Activated CD4-positive, alpha-beta memory T cell treated with anti-CD3 and anti-CD28 coated beads for 36 hours (primary cell): ENCODE measurements at regions of chr20 and their contacts with region 1.

Region 1: DNA sequence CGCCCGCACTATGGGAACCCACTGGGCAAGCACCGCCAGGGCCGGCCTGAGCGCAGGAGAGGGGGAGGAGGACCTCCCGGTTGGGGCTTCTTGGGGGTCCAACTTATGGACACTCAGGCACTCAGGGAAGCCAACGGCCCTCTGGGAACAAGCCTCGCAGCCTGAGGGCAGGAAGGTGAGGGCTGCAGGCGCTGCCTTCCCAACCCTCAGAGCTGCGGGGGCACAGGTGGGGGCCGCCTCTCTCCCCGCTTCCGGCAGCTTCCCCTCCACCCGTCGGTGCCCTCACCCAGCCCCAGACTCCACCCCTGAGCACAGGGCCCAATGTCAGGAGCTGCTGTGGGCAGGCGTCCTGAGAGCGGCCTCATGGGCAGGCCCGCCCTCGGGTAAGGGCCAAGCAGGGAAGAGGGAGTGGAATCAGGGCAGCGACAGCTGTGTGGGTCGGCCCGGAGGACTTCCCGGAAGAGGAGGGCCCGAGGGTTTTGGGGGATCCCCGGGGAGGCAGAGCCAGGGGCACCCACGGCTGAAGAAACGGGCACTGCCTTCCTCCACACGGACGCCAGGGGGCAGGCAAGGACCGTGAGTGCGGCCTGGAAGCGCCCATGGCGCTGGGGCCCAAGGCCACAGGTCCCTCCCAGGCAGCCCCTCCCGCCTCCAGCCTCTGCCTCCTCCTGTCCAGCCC is 488 bp upstream of the PTK6 start:
- DNase-seq: peak; percentile 99
- H3K4me3 Mint-ChIP-seq: peak overlapping the region; percentile 66
- H3K27ac Mint-ChIP-seq: peak overlapping the region; percentile 80
- H3K4me1 Mint-ChIP-seq: peaks cover 15% of the 10 kb centered on the region
- H3K27me3 Mint-ChIP-seq: no peaks in the 10 kb centered on the region

Region 2: DNA sequence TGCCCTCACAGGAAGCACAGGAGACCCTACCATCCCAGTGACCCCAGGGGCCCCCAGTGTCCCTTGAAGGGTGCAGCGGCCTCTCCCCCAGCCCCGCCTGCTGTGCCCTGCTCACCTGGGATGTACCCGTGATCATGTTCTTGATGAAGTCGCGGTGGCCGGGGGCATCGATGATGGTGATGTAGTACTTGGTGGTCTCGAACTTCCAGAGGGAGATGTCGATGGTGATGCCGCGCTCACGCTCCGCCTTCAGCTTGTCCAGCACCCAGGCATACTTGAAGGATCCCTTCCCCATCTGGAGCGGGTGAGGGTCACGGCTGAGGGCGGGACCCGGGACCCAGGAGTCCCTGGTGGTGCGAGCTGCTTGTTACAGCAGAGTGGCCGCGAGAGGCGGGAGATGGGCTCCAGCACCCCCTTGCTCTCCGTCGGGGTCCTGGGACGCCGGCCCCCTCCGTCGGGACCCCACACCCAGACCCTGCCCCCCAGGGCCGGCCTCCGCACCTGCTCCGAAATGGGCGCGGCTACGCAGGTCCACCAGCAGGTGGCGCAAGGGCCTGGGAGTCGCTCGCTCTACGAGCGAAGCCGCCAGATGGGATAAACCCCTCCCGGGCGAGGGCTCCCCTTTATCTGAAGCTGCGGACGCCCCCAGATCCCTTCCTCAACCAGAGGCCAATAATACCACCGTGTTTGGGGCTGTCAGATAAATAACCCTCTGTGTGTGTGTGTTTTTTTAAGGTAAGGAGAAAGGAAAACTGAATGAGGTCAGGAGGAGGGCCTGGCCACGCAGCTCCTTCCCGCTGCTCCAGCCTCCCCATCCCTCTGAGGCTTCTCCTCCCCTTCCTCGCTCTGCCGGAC is 41.7 kb before region 1 on chr20:
- CTCF ChIA-PET with region 1: interaction called, 11 read pairs
- POLR2A ChIA-PET with region 1: interaction called, 4 read pairs
- intact Hi-C with region 1: no loop called
- DNase-seq: peak; percentile 79
- H3K4me3 Mint-ChIP-seq: no peak overlapping the region
- H3K27ac Mint-ChIP-seq: no peak overlapping the region
- H3K4me1 Mint-ChIP-seq: no peaks in the 10 kb centered on the region
- H3K27me3 Mint-ChIP-seq: peaks cover 18% of the 10 kb centered on the region

Region 3: DNA sequence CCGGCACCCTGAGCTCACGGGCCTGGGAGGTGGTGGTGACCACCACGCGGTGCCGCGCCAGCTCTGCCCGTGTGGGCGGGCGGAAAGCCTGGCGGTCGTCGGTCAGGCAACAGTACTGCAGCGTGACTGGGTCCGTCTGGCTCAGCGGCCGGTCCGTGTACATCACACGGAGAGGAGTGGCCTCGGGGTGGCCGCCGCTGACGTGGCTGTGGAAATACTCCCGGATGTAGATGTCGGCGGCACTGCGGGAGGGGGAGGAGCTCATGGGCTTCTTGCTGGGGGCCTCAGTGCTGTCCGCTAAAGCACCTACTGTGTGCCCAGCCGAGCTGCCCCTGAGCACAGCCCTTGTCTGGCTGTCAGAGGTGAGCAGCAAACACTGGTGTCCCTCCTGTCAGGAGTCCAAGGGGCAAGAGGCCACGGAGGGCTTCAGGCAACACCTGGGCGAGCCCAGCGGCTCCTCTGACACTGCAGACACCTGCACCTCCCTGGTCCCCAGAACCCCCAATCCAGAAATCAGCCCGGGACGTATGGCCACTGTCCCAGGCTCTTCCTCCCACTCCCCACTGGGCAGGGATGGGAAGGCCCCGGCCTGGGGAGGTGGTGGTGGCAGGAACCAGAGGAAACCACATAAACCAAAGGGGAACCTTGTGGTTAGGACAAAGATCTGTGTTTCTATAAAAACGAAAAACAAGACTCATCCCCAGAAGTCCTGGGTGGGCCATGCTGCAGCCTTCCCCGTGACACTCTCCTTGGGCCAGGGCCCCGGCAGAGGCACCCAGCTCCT is 29.9 kb after region 1 on chr20:
- CTCF ChIA-PET with region 1: interaction called, 11 read pairs
- POLR2A ChIA-PET with region 1: interaction called, 3 read pairs
- intact Hi-C with region 1: no loop called
- DNase-seq: peak; percentile 80
- H3K4me3 Mint-ChIP-seq: peak overlapping the region; percentile 45
- H3K27ac Mint-ChIP-seq: peak overlapping the region; percentile 42
- H3K4me1 Mint-ChIP-seq: peaks cover 25% of the 10 kb centered on the region
- H3K27me3 Mint-ChIP-seq: peaks cover 2% of the 10 kb centered on the region

Region 4: DNA sequence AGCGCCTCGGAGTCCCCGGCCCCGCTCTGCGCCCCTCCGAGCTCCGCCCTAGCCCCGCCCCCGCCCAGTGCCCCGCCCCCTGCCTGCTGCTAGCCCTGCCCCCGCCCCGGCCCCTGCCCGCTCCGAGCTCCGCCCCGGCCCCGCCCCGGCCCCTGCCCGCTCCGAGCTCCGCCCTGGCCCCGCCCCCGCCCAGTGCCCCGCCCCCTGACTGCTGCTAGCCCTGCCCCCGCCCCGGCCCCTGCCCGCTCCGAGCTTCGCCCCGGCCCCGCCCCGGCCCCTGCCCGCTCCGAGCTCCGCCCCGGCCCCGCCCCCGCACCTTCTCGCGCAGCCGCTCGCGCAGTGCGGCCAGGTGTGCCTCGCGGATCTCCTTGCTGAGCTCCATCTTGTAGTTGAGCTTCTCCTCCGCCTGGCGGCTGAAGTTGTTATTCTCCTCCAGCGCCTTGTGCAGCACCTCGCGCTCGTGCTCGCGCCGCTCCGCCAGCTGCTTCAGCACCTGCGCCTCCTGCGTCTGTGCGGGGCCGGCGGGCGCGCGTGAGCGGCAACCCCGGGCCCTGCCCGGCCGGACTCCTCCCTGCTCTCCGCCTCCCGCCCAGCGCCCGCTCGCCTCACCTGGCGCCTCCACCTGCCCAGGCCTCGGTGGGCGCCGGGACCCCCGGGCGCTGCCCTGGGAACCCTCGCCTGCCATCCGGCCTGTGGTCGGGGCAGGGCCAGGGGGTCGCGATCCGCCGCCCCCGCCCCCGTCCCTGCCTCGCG is 104.3 kb after region 1 on chr20:
- CTCF ChIA-PET with region 1: interaction called, 17 read pairs
- POLR2A ChIA-PET with region 1: interaction called, 3 read pairs
- intact Hi-C with region 1: loop called (anchors 5 kb)
- DNase-seq: peak; percentile 97
- H3K4me3 Mint-ChIP-seq: peak overlapping the region; percentile 69
- H3K27ac Mint-ChIP-seq: peak overlapping the region; percentile 77
- H3K4me1 Mint-ChIP-seq: peaks cover 26% of the 10 kb centered on the region
- H3K27me3 Mint-ChIP-seq: no peaks in the 10 kb centered on the region

Region 5: DNA sequence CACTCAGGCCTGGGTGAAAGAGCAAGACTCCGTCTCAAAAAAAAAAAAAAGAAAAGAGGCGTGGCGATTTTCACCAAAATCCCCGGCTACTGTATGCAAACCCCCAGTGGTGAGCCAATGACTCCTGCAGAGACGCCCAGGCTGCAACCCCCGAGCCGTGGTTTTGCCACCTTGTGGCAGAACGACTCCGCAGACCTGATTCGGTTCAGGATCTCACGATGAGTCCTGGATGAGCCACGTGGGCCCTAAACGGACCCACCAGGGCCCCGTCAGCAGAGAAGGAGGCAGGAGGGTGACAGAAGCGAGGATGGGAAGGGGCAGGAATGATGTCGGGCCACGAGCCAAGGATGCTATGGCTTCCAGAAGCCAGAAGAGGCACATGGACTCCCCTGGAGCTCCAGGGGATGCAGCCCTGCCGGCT is 244.4 kb after region 1 on chr20:
- CTCF ChIA-PET with region 1: interaction called, 10 read pairs
- POLR2A ChIA-PET with region 1: no interaction called
- intact Hi-C with region 1: no loop called
- DNase-seq: peak; percentile 79
- H3K4me3 Mint-ChIP-seq: no peak overlapping the region
- H3K27ac Mint-ChIP-seq: no peak overlapping the region
- H3K4me1 Mint-ChIP-seq: peaks cover 13% of the 10 kb centered on the region
- H3K27me3 Mint-ChIP-seq: no peaks in the 10 kb centered on the region

Region 6: GRCh38 chr20:63955827-63956663 is 418.4 kb after region 1 on chr20 and contains the start of gene UCKL1:
- CTCF ChIA-PET with region 1: interaction called, 4 read pairs
- POLR2A ChIA-PET with region 1: interaction called, 5 read pairs
- intact Hi-C with region 1: loop called (anchors 5 kb)
- DNase-seq: peak; percentile 92
- H3K4me3 Mint-ChIP-seq: peak within 1 kb of the TSS; percentile 81
- H3K27ac Mint-ChIP-seq: peak within 1 kb of the TSS; percentile 89
- H3K4me1 Mint-ChIP-seq: peaks cover 35% of the 10 kb centered on the region
- H3K27me3 Mint-ChIP-seq: no peaks in the 10 kb centered on the region
- total RNA-seq, gene UCKL1: 26.6 to 29.6 TPM

Region 7: DNA sequence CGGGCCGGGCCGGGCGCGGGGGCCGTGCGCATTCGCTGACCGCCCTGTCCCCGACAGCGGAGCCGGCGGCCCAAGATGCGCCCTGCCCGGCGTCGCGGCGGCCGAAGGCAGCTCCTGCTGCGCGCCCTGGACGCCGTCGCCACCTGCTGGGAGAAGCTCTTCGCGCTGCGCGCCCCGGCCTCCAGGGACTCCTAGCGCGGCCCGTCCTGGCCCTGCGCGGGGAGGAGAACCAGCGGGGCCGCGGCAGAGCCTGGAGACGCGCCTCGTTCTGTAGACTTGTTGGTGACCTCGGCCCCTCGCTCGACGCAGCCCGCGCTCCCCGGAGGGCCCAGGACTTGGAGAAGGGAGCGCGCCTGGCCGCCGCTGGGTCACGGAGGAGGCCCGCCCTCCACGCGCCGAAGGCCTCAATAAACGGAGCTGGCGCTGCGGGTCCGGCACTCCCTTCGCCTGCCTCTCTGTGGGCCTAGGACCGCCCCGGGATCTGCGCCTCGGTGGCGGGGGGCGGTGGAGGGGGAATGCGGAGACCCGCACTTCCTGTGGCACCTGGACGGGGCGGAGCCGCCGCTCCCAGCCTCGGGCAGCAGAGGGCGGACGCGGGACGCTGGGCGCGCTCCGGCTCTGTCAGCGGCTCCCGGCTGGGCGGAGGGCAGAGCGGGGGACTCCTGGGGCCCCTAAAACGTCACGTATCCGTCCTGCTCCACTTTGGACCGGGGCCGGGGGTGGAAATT is 501.1 kb after region 1 on chr20:
- CTCF ChIA-PET with region 1: interaction called, 15 read pairs
- POLR2A ChIA-PET with region 1: no interaction called
- intact Hi-C with region 1: no loop called
- DNase-seq: peak; percentile 84
- H3K4me3 Mint-ChIP-seq: peak overlapping the region; percentile 60
- H3K27ac Mint-ChIP-seq: no peak overlapping the region
- H3K4me1 Mint-ChIP-seq: peaks cover 43% of the 10 kb centered on the region
- H3K27me3 Mint-ChIP-seq: peaks cover 2% of the 10 kb centered on the region